ENCODE measurements at regions of chr12 and their contacts with region 1.

Region 1: DNA sequence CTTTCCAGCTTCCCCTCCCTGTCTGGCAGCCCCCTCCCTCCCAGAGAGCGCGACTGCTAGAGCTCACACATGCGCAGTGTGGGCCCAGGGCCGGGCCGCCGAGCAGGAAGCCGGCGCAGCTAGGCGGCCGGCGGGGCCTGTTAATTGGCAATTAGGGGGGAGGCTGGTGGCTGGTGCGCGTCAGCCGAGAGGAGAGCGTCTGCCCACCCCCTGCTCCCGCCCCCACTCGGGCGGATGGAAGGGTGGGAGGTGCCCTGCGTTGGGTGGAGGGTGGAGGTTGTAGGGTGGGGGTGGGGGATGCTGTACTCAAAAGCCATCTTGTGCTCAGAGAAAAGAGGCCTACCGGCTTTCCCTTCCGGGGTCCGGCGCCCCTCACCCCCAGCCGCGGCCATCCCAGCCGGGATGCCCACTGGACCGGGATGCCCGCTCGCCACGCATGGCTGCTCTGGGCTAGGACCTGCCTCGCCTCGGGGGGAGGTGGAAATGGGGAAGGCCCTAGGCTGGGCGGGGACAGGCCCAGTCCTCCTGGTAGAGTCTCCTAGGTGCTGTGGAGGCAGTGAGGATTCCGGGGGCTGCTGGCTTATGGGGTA is 9.2 kb downstream of the HOXC8 start:
- DNase-seq: peak; percentile 92 to 93
- ATAC-seq: peak; percentile 70 to 79
- H3K4me3 ChIP-seq: peak overlapping the region; percentile 61
- H3K27ac ChIP-seq: peak overlapping the region; percentile 96 to 99
- H3K4me1 ChIP-seq: peaks cover 48% of the 10 kb centered on the region
- CTCF ChIP-seq: no peak
- EP300 ChIP-seq: no peak
- POLR2A ChIP-seq: peak; percentile 40
- RAD21 ChIP-seq: no peak

Region 2: DNA sequence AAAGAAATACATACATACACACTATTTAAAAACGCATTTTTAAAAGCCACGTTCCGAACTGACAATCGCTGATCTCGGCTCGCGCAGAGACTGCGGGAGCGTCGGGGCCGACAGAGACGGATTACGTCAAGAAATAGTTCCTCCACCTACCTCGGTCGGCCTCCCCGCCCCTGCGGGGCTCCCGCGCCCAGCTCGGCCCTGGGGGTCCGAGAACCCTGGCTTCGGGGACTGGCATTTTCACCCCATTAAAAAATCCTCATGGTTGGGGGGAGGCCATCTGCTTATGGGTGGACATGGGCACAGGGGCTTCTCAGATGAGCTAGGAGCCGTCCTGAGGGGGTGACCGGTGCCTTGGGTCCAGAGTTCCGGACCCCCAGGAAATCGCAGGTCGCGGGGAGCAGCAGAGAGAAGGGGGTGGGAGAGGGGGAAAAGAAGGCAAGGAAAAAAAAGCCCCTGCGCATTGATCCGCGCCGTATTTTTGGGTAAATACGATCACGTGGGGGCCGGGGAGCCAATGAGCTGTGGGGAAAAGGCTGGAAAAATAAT is 18.3 kb before region 1 on chr12:
- CTCF ChIA-PET with region 1: interaction called, 54 read pairs
- POLR2A ChIA-PET with region 1: interaction called, 18 read pairs
- DNase-seq: peak; percentile 82 to 92
- ATAC-seq: peak; percentile 30 to 64; a peak in 5 of 6 replicates
- H3K4me3 ChIP-seq: peak overlapping the region; percentile 83
- H3K27ac ChIP-seq: peak overlapping the region; percentile 93 to 96
- H3K4me1 ChIP-seq: peaks cover 14% of the 10 kb centered on the region
- CTCF ChIP-seq: no peak
- EP300 ChIP-seq: no peak
- POLR2A ChIP-seq: no peak
- RAD21 ChIP-seq: no peak

Region 3: DNA sequence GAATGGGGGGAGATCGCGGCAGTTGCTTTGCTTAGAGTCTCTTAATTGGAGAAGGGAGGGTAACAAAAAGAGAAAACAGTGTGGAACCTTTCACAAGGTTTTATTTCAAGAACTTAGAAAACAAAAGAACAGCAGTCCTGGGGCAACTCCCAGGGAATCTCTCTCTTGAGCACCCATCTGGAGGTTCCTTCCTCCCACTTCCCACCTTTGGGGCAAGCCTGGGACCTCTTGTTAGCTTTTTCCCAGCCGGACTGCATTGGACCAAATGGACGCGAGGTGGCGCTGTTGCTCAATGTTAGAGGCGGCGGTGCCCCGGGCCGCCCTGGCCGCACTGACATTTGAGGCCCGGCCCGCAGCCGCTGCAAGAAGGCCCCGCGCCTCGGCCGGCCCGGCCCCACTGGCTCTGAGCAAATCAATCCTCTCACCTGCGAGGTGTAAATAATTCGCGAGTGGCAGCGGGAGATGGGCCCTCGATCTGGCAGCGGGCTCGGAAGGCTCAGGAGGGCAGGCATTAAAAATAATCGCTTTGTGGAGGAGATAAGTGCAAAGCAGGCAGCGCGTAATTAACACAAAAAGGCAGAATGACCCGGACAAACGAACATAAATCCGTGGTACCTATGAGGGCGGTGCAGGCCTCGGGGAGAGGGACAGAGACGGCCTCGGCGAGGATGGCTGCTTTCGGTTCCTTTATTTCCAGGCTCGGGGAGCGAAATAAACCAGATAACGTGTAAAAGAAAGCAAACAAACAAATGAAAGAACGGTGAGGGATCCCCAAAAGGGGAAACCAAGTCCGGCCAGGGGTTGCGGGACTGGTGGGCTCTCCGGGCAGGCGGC is 11.9 kb before region 1 on chr12:
- CTCF ChIA-PET with region 1: interaction called, 54 read pairs
- POLR2A ChIA-PET with region 1: interaction called, 40 read pairs
- DNase-seq: peak; percentile 82 to 86
- ATAC-seq: peak; percentile 59 to 82
- H3K4me3 ChIP-seq: no peak overlapping the region
- H3K27ac ChIP-seq: peak overlapping the region in 1 of 2 experiments; percentile 74; a peak in 3 of 6 replicates
- H3K4me1 ChIP-seq: peaks cover 19% of the 10 kb centered on the region
- CTCF ChIP-seq: peak; percentile 93
- EP300 ChIP-seq: no peak
- POLR2A ChIP-seq: no peak
- RAD21 ChIP-seq: peak; percentile 97 to 98

Region 4: GRCh38 chr12:54053751-54054741 is 36.1 kb after region 1 on chr12 and contains the start of gene HOXC4:
- CTCF ChIA-PET with region 1: no interaction called
- POLR2A ChIA-PET with region 1: interaction called, 19 read pairs
- DNase-seq: peak; percentile 63 to 82
- ATAC-seq: peak; percentile 82 to 93
- H3K4me3 ChIP-seq: peak within 1 kb of the TSS; percentile 67
- H3K27ac ChIP-seq: peak within 1 kb of the TSS; percentile 90 to 94
- H3K4me1 ChIP-seq: peaks cover 17% of the 10 kb centered on the region
- CTCF ChIP-seq: no peak
- EP300 ChIP-seq: no peak
- POLR2A ChIP-seq: no peak; the same call in 1 of the 2 replicates
- RAD21 ChIP-seq: no peak
- polyA plus RNA-seq, gene HOXC4: 1.3 and 1.5 TPM in 2 replicates

Region 5: GRCh38 chr12:54191550-54192022 is 173.6 kb after region 1 on chr12:
- CTCF ChIA-PET with region 1: interaction called, 1,074 read pairs
- POLR2A ChIA-PET with region 1: interaction called, 14 read pairs
- DNase-seq: peak; percentile 87 to 92
- ATAC-seq: peak; percentile 71 to 84
- H3K4me3 ChIP-seq: no peak overlapping the region
- H3K27ac ChIP-seq: peak overlapping the region; percentile 10 to 70; a peak in 3 of 6 replicates
- H3K4me1 ChIP-seq: peaks cover 25% of the 10 kb centered on the region
- CTCF ChIP-seq: peak; percentile 79
- EP300 ChIP-seq: no peak
- POLR2A ChIP-seq: no peak
- RAD21 ChIP-seq: peak; percentile 90 to 92

Region 6: GRCh38 chr12:54207484-54208294 is 189.7 kb after region 1 on chr12:
- CTCF ChIA-PET with region 1: interaction called, 1,074 read pairs
- POLR2A ChIA-PET with region 1: interaction called, 5 read pairs
- DNase-seq: peak; percentile 80 to 81
- ATAC-seq: peak; percentile 81 to 95
- H3K4me3 ChIP-seq: no peak overlapping the region
- H3K27ac ChIP-seq: no peak overlapping the region
- H3K4me1 ChIP-seq: no peaks in the 10 kb centered on the region
- CTCF ChIP-seq: peak; percentile 81
- EP300 ChIP-seq: no peak
- POLR2A ChIP-seq: no peak
- RAD21 ChIP-seq: peak; percentile 83 to 92

Measured in A549 (cell line).